Gastrocnemius medialis (tissue), 4 donors: ENCODE measurements at regions of chr3 and their contacts with region 1.

Region 1: GRCh38 chr3:188220988-188221818 is 67.2 kb downstream of the LPP start:
- DNase-seq: peak; percentile 95 to 98
- ATAC-seq: peak; percentile 93 to 95
- H3K4me3 ChIP-seq: no peak overlapping the region
- H3K27ac ChIP-seq: peak overlapping the region; percentile 91 to 97 (median 93)
- H3K4me1 ChIP-seq: peaks cover 70% of the 10 kb centered on the region in 2 donors
- H3K27me3 ChIP-seq: no peaks in the 10 kb centered on the region
- CTCF ChIP-seq: no peak
- POLR2A ChIP-seq: peak; percentile 56 to 77

Region 2: DNA sequence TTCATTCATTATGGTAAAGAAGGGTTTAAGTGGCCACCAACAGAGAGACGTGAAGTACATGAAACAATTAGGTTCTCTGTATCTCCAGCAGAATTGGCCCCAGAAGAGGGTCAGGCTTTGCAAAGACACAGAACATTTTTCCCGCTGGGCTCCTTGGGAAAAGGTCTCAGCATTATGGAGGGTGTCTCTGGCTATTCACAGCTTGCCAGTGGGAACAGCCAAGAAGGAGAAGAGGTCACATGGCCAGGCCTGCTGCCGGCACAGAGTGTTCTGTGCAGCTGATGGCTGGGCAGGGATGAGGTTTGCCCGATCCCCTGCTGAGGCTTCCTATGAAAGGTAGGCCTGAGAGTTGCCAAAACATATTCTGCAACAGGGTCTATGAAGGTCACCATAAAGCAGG is 145.0 kb before region 1 on chr3:
- in situ Hi-C with region 1: no loop called
- intact Hi-C with region 1: loop called (anchors 5 kb)
- DNase-seq: peak; percentile 44 to 83
- ATAC-seq: peak; percentile 58 to 74
- H3K4me3 ChIP-seq: no peak overlapping the region
- H3K27ac ChIP-seq: peak overlapping the region; percentile 73 to 86 (median 82)
- H3K4me1 ChIP-seq: peaks cover 13 to 27% of the 10 kb centered on the region in 2 donors
- H3K27me3 ChIP-seq: no peaks in the 10 kb centered on the region
- CTCF ChIP-seq: no peak
- POLR2A ChIP-seq: no peak

Region 3: GRCh38 chr3:188154014-188154808 is 67.0 kb before region 1 on chr3 and contains the start of gene LPP:
- in situ Hi-C with region 1: no loop called
- intact Hi-C with region 1: loop called (anchors 2 kb)
- DNase-seq: peak; percentile 53 to 76
- ATAC-seq: peak; percentile 60 to 70
- H3K4me3 ChIP-seq: peak within 1 kb of the TSS; percentile 61 to 96 (median 83)
- H3K27ac ChIP-seq: peak within 1 kb of the TSS; percentile 93 to 98 (median 98)
- H3K4me1 ChIP-seq: peaks cover 44 to 54% of the 10 kb centered on the region in 2 donors
- H3K27me3 ChIP-seq: no peaks in the 10 kb centered on the region
- CTCF ChIP-seq: no peak
- POLR2A ChIP-seq: peak; percentile 78 to 80
- total RNA-seq, gene LPP: 56.0 to 65.7 (median 58.1) TPM

Region 4: DNA sequence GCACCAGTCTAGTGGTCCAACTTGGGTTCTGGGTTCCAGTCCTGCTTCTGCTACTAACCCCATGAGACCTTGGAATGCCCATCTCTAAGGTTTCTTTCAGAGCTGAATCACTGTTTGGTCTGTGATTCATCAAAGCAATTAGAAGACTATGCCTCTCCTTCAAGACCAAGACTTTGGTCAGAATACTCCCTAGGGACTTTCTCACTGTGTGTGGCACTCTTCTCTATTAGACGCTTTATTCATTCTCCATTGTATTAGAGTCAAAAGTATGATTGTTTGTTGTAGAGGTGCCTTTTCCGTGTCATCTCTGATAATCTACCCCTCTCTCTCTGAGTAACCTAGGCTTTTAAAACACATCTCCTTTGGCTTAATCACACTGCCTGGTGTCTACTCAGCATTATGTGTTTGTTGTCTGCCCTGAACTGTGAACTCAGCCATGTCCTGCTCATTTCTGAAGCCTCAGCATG is 23.2 kb after region 1 on chr3:
- in situ Hi-C with region 1: no loop called
- intact Hi-C with region 1: loop called (anchors 1 kb)
- DNase-seq: no peak
- ATAC-seq: no peak
- H3K4me3 ChIP-seq: no peak overlapping the region
- H3K27ac ChIP-seq: peak overlapping the region; percentile 84 to 89 (median 86)
- H3K4me1 ChIP-seq: peaks cover 49 to 50% of the 10 kb centered on the region in 2 donors
- H3K27me3 ChIP-seq: no peaks in the 10 kb centered on the region
- CTCF ChIP-seq: no peak
- POLR2A ChIP-seq: no peak

Region 5: DNA sequence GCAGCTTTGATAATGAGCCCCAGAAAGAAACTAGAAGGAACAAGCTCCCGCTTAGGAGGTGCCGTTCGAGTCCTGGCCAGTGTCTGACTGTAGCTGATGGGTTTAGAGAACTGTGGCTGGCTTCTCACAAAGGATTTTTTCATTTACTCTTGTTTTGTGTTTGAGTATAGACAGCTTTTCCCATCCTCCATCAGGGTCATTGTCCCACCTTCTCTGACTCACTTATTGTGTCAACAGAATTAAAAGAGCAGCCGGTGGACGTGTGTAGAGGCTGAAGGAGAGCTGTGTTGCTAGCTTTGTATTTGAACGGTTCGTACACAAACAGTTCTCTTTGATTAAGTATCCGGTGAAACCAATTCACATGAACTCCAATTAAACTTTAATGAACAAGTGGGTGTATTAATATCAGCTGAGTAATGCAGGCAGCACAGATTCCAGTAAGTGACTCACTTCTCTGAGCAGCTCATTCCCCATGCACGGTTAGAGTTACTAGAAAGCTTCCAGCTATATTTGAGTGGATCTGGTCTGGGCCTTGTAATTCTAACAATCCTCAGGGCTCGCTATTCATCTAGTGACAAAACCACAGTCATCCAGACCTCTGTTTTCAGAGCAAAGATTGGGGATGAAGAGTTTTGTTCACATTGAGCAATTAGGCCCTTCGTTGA is 73.8 kb after region 1 on chr3:
- in situ Hi-C with region 1: no loop called
- intact Hi-C with region 1: loop called (anchors 2 kb)
- DNase-seq: peak; percentile 59 to 60
- ATAC-seq: peak; percentile 98
- H3K4me3 ChIP-seq: peak overlapping the region; percentile 16 to 28 (median 24)
- H3K27ac ChIP-seq: peak overlapping the region; percentile 84 to 89 (median 86)
- H3K4me1 ChIP-seq: peaks cover 44 to 47% of the 10 kb centered on the region in 2 donors
- H3K27me3 ChIP-seq: no peaks in the 10 kb centered on the region
- CTCF ChIP-seq: no peak
- POLR2A ChIP-seq: no peak

Region 6: DNA sequence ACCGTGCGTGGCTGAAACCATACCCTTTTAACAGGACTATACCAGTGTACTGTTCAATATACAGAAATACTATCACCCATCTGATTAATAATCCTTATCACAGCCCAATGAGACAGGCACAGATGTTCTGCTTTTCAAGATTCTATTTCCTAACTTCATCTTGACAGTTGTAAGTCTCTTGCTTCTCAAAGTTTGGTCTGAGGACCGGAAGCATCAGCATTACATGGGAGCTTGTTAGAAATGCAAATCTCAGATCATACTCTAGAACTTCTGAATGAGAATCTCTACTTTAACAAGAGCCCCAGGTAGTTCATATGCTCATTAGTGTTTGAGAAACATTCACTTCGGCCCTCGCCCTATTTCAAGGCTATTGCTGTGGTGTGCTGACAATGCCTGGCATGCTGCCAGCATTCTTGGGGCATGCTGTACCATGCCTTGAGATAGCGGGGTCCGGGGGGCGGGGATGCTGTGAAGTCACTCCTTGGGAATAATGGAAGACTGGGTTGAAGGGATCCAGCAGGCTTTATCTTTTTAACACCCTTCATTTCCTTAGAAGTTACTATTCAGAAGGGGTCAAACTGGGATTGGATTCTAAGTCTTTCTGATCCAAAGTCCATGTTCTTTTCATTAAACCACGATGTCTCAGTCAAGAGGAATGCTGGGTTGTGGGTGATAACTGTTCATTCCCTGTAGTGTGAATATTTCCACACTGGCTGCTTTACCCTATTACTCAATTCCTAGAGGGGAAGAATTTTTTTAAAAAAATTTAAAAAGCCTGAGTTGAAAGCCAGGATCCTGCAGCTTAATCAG is 127.4 kb after region 1 on chr3:
- in situ Hi-C with region 1: no loop called
- intact Hi-C with region 1: loop called (anchors 2 kb)
- DNase-seq: peak in 1 of 2 donors; percentile 61
- ATAC-seq: peak; percentile 31 to 36
- H3K4me3 ChIP-seq: no peak overlapping the region
- H3K27ac ChIP-seq: peak overlapping the region; percentile 80 to 91 (median 86)
- H3K4me1 ChIP-seq: peaks cover 42 to 80% of the 10 kb centered on the region in 2 donors
- H3K27me3 ChIP-seq: no peaks in the 10 kb centered on the region
- CTCF ChIP-seq: no peak
- POLR2A ChIP-seq: no peak

Region 7: GRCh38 chr3:189813647-189814240 is 1592.5 kb after region 1 on chr3:
- in situ Hi-C with region 1: no loop called
- intact Hi-C with region 1: loop called (anchors 10 kb)
- DNase-seq: peak; percentile 90 to 96
- ATAC-seq: peak; percentile 92 to 94
- H3K4me3 ChIP-seq: peak overlapping the region in 3 of 4 donors; percentile 15 to 29 (median 23)
- H3K27ac ChIP-seq: peak overlapping the region; percentile 92 to 95 (median 93)
- H3K4me1 ChIP-seq: peaks cover 30 to 64% of the 10 kb centered on the region in 2 donors
- H3K27me3 ChIP-seq: no peaks in the 10 kb centered on the region
- CTCF ChIP-seq: no peak
- POLR2A ChIP-seq: peak in 1 of 2 donors; percentile 30